ENCODE measurements at regions of chr9 and their contacts with region 1.

Region 1: DNA sequence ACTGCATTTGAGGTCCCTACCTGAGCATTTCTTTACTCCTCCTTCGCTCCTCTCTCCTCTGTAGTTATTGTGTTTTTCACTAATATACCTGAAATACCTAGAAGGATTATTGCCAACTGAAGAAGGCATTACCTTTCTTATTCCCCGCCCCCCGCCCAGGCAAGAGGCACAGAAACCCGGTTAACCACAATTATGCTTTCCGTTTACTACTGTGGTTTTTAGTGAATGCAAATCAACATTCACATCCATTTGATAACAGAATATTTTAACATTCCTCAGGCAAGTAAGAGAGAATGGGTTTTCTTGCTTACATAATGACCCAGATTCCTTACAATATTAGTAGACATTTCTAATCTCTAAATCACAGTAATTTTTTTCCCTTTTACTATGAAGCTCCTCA is 136.9 kb downstream of the PCSK5 start:
- DNase-seq: no peak
- ATAC-seq: no peak
- H3K4me3 ChIP-seq: no peak overlapping the region
- H3K27ac ChIP-seq: no peak overlapping the region
- H3K4me1 ChIP-seq: peaks cover 19% of the 10 kb centered on the region
- H3K27me3 ChIP-seq: no peaks in the 10 kb centered on the region
- CTCF ChIP-seq: no peak
- EP300 ChIP-seq: no peak
- POLR2A ChIP-seq: no peak
- RAD21 ChIP-seq: no peak

Region 2: DNA sequence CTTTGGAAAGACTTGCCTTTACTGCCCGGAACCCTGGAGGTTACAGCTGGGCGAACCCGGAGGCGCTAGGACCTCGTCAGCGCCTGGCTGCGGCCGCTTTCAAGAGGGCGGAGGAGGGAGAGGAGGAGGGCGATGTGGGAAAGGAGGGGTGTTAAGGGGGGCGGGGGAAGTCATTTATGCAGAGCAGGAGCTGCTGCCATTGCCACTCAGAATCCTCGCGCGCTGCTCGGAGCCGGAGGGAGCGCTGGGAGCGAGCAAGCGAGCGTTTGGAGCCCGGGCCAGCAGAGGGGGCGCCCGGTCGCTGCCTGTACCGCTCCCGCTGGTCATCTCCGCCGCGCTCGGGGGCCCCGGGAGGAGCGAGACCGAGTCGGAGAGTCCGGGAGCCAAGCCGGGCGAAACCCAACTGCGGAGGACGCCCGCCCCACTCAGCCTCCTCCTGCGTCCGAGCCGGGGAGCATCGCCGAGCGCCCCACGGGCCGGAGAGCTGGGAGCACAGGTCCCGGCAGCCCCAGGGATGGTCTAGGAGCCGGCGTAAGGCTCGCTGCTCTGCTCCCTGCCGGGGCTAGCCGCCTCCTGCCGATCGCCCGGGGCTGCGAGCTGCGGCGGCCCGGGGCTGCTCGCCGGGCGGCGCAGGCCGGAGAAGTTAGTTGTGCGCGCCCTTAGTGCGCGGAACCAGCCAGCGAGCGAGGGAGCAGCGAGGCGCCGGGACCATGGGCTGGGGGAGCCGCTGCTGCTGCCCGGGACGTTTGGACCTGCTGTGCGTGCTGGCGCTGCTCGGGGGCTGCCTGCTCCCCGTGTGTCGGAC is 136.7 kb before region 1 on chr9 and contains the start of gene PCSK5:
- CTCF ChIA-PET with region 1: no interaction called
- POLR2A ChIA-PET with region 1: no interaction called
- in situ Hi-C with region 1: no loop called
- intact Hi-C with region 1: loop called (anchors 5 kb)
- DNase-seq: peak; percentile 58
- ATAC-seq: peak; percentile 93
- H3K4me3 ChIP-seq: peak within 1 kb of the TSS; percentile 60 to 77 (median 64)
- H3K27ac ChIP-seq: no peak within 1 kb of the TSS
- H3K4me1 ChIP-seq: peaks cover 19% of the 10 kb centered on the region
- H3K27me3 ChIP-seq: peaks cover 0 to 38% of the 10 kb centered on the region in 2 experiments; a peak in 4 of 5 replicates
- CTCF ChIP-seq: peak; percentile 49
- EP300 ChIP-seq: no peak
- POLR2A ChIP-seq: no peak
- RAD21 ChIP-seq: peak; percentile 44; the same call in 1 of the 2 replicates
- total RNA-seq, gene PCSK5: 0.11 and 0.55 TPM in 2 replicates

Region 3: DNA sequence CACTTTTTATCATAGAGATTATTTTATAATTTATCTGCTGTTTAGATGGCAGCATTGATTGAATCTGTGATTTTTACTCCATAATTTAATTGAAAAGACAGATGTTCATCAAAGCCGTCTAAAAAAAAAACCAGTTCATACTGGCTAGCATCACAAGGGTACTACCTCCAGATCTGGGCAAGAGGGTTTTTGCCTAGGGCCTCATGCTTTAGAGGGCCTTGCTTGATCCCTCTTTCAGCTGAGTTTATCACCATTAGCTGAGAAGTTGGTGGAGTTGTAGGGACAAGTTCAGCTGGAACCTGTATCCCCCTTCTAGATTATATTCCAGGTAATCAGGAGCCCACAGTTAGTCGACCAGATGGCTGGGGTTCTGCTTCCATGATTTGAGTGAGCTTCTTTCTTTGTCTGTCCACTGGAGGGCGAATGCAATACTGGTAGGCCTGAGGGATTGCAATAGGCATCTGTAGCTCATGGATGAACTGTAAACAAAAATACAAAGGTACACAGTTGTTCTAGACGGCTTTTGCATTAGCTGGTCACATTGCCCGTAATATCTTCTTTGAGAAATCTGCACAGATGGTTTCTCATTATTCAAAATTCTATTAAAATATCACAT is 48.2 kb before region 1 on chr9:
- CTCF ChIA-PET with region 1: no interaction called
- POLR2A ChIA-PET with region 1: no interaction called
- in situ Hi-C with region 1: loop called (anchors 10 kb)
- intact Hi-C with region 1: no loop called
- DNase-seq: peak; percentile 18
- ATAC-seq: peak; percentile 81
- H3K4me3 ChIP-seq: no peak overlapping the region
- H3K27ac ChIP-seq: no peak overlapping the region
- H3K4me1 ChIP-seq: no peaks in the 10 kb centered on the region
- H3K27me3 ChIP-seq: no peaks in the 10 kb centered on the region
- CTCF ChIP-seq: peak; percentile 34
- EP300 ChIP-seq: no peak
- POLR2A ChIP-seq: no peak
- RAD21 ChIP-seq: no peak

Measured in HepG2 (cell line).